Sciatic nerve (tissue), 2 donors: ENCODE measurements at regions of chr3 and their contacts with region 1.

Region 1: GRCh38 chr3:142418926-142419592 is 28.8 kb downstream of the XRN1 start:
- DNase-seq: no peak
- ATAC-seq: no peak

Region 2: DNA sequence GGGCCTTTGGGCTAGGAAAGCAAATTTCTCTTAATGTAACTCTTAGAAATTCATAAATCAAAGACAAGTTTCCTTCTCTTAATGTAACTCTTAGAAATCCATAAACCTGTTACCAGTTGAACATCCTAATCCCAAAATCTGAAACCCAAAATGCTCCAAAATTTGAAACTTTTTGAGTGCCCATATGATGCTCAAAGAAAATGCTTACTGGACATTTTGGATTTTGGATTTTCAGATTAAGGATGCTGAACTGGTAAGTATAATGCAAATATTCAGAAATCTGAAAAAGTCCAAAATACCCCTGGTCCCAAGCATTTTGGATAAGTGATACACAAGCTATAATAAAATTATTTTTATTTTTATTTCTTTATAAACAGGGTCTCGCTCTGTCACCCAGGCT is 1102.2 kb before region 1 on chr3:
- intact Hi-C with region 1: loop called (anchors 5 kb)
- DNase-seq: no peak
- ATAC-seq: no peak

Region 3: DNA sequence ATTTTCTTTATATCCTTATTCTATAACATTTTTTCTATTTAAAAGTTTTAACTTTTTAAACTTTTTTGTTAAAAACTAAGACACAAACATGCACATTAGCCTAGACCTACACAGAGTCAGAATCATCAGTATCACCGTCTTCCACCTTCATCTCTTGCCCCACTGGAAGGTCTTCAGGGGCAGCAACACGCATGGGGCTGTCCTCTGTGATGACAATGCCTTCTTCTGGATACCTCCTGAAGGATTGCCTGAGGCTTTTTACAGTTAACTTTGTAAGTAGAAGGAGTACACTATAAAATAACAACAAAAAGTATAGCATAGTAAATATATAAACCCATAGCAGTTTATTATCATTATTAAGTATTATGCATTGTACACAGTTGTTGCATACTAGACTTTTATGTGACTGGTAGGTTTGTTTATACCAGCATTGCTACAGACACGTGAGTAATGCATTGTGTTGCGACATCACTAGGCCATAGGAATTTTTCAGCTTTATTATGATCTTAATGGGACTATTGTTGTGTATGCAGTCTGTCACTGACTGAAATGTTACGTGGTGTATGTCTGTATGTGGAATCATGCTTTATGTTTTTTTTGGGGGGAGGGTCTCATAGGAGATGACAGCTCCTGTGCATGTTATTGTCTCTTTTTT is 524.4 kb before region 1 on chr3:
- intact Hi-C with region 1: no loop called
- DNase-seq: no peak
- ATAC-seq: peak; percentile 60

Region 4: DNA sequence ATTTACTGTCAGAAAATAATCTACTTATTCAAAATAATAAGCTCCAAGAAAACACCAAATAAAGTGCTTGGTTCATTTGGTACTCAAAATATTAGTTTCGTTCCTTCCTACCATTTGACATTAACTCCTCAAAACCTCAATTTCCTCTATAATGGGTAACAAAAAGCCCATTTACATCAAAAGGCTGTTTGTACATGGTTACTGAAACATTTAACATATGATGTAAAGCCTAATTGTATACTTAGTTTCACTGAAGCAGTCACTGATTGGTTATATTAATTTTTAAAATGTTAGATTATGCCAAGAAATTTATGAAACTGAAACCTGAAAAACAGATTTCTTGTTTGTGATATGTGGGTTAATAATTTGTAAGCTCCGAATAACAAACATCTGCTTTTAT is 14.1 kb after region 1 on chr3:
- intact Hi-C with region 1: no loop called
- DNase-seq: no peak
- ATAC-seq: no peak